ENCODE measurements at regions of chr6 and their contacts with region 1.

Region 1: GRCh38 chr6:127266178-127266891 is at the start of gene RNF146:
- DNase-seq: peak; percentile 55 to 81 (median 75)
- ATAC-seq: peak; percentile 86
- H3K4me3 ChIP-seq: peak within 1 kb of the TSS; percentile 96
- H3K4me3 Mint-ChIP-seq: peak within 1 kb of the TSS; percentile 92 to 100 (median 96)
- H3K27ac ChIP-seq: peak within 1 kb of the TSS; percentile 95
- H3K27ac Mint-ChIP-seq: peak within 1 kb of the TSS; percentile 91 to 100 (median 98)
- H3K4me1 ChIP-seq: peaks cover 12 to 15% of the 10 kb centered on the region in 2 donors
- H3K4me1 Mint-ChIP-seq: peaks cover 28 to 53% (median 41%) of the 10 kb centered on the region in 7 donors
- H3K27me3 ChIP-seq: no peaks in the 10 kb centered on the region
- H3K27me3 Mint-ChIP-seq: peaks cover 0 to 19% (median 0%) of the 10 kb centered on the region in 5 donors
- total RNA-seq, gene RNF146: 17.6 to 38.1 (median 20.8) TPM

Region 2: GRCh38 chr6:125779924-125780539 is 1486.3 kb before region 1 on chr6:
- CTCF ChIA-PET with region 1: no interaction called
- POLR2A ChIA-PET with region 1: no interaction called
- intact Hi-C with region 1: loop called in 1 of 2 experiments (anchors 1 kb)
- DNase-seq: peak; percentile 83 to 96 (median 94)
- ATAC-seq: peak; percentile 89
- H3K4me3 ChIP-seq: peak overlapping the region; percentile 84
- H3K4me3 Mint-ChIP-seq: no peak overlapping the region
- H3K27ac ChIP-seq: peak overlapping the region; percentile 77
- H3K27ac Mint-ChIP-seq: no peak overlapping the region
- H3K4me1 ChIP-seq: peaks cover 4 to 19% of the 10 kb centered on the region in 2 donors
- H3K4me1 Mint-ChIP-seq: peaks cover 5 to 27% (median 22%) of the 10 kb centered on the region in 7 donors
- H3K27me3 ChIP-seq: no peaks in the 10 kb centered on the region
- H3K27me3 Mint-ChIP-seq: peaks cover 0 to 28% (median 0%) of the 10 kb centered on the region in 5 donors

Region 3: GRCh38 chr6:125986300-125987025 is 1279.9 kb before region 1 on chr6 and contains the start of gene TRMT11:
- CTCF ChIA-PET with region 1: no interaction called
- POLR2A ChIA-PET with region 1: no interaction called
- intact Hi-C with region 1: loop called (anchors 5 to 10 kb)
- DNase-seq: peak; percentile 58 to 80 (median 77)
- ATAC-seq: peak; percentile 95
- H3K4me3 ChIP-seq: peak within 1 kb of the TSS; percentile 89
- H3K4me3 Mint-ChIP-seq: peak within 1 kb of the TSS in 4 of 10 donors; percentile 12 to 40 (median 24)
- H3K27ac ChIP-seq: peak within 1 kb of the TSS; percentile 76
- H3K27ac Mint-ChIP-seq: no peak within 1 kb of the TSS
- H3K4me1 ChIP-seq: peaks cover 14 to 21% of the 10 kb centered on the region in 2 donors
- H3K4me1 Mint-ChIP-seq: peaks cover 0 to 19% (median 2%) of the 10 kb centered on the region in 7 donors
- H3K27me3 ChIP-seq: no peaks in the 10 kb centered on the region
- H3K27me3 Mint-ChIP-seq: no peaks in the 10 kb centered on the region
- total RNA-seq, gene TRMT11: 13.6 to 34.1 (median 20.1) TPM

Region 4: GRCh38 chr6:126339796-126340609 is 926.3 kb before region 1 on chr6 and contains the start of gene CENPW:
- CTCF ChIA-PET with region 1: no interaction called
- POLR2A ChIA-PET with region 1: no interaction called
- intact Hi-C with region 1: loop called in 1 of 2 experiments (anchors 1 kb)
- DNase-seq: peak; percentile 84 to 96 (median 87)
- ATAC-seq: peak; percentile 98
- H3K4me3 ChIP-seq: peak within 1 kb of the TSS; percentile 80
- H3K4me3 Mint-ChIP-seq: no peak within 1 kb of the TSS
- H3K27ac ChIP-seq: peak within 1 kb of the TSS; percentile 33
- H3K27ac Mint-ChIP-seq: no peak within 1 kb of the TSS
- H3K4me1 ChIP-seq: peaks cover 6 to 12% of the 10 kb centered on the region in 2 donors
- H3K4me1 Mint-ChIP-seq: peaks cover 5 to 21% (median 12%) of the 10 kb centered on the region in 7 donors
- H3K27me3 ChIP-seq: no peaks in the 10 kb centered on the region
- H3K27me3 Mint-ChIP-seq: no peaks in the 10 kb centered on the region
- total RNA-seq, gene CENPW: 1.2 to 37.1 (median 3.9) TPM

Region 5: GRCh38 chr6:126738146-126738545 is 528.2 kb before region 1 on chr6:
- CTCF ChIA-PET with region 1: no interaction called
- POLR2A ChIA-PET with region 1: no interaction called
- intact Hi-C with region 1: no loop called
- DNase-seq: no peak
- ATAC-seq: no peak
- H3K4me3 ChIP-seq: no peak overlapping the region
- H3K4me3 Mint-ChIP-seq: no peak overlapping the region
- H3K27ac ChIP-seq: no peak overlapping the region
- H3K27ac Mint-ChIP-seq: no peak overlapping the region
- H3K4me1 ChIP-seq: no peaks in the 10 kb centered on the region
- H3K4me1 Mint-ChIP-seq: no peaks in the 10 kb centered on the region
- H3K27me3 ChIP-seq: no peaks in the 10 kb centered on the region
- H3K27me3 Mint-ChIP-seq: peaks cover 0 to 4% (median 0%) of the 10 kb centered on the region in 5 donors

Region 6: GRCh38 chr6:127279815-127280214 is 13.5 kb after region 1 on chr6:
- CTCF ChIA-PET with region 1: interaction called, 6 read pairs
- POLR2A ChIA-PET with region 1: interaction called, 5 read pairs
- intact Hi-C with region 1: loop called in 1 of 2 experiments (anchors 1 kb)
- DNase-seq: no peak
- ATAC-seq: no peak
- H3K4me3 ChIP-seq: no peak overlapping the region
- H3K4me3 Mint-ChIP-seq: no peak overlapping the region
- H3K27ac ChIP-seq: no peak overlapping the region
- H3K27ac Mint-ChIP-seq: peak overlapping the region in 6 of 9 donors; percentile 16 to 72 (median 46)
- H3K4me1 ChIP-seq: no peaks in the 10 kb centered on the region
- H3K4me1 Mint-ChIP-seq: peaks cover 0 to 25% (median 14%) of the 10 kb centered on the region in 7 donors
- H3K27me3 ChIP-seq: no peaks in the 10 kb centered on the region
- H3K27me3 Mint-ChIP-seq: no peaks in the 10 kb centered on the region

Region 7: DNA sequence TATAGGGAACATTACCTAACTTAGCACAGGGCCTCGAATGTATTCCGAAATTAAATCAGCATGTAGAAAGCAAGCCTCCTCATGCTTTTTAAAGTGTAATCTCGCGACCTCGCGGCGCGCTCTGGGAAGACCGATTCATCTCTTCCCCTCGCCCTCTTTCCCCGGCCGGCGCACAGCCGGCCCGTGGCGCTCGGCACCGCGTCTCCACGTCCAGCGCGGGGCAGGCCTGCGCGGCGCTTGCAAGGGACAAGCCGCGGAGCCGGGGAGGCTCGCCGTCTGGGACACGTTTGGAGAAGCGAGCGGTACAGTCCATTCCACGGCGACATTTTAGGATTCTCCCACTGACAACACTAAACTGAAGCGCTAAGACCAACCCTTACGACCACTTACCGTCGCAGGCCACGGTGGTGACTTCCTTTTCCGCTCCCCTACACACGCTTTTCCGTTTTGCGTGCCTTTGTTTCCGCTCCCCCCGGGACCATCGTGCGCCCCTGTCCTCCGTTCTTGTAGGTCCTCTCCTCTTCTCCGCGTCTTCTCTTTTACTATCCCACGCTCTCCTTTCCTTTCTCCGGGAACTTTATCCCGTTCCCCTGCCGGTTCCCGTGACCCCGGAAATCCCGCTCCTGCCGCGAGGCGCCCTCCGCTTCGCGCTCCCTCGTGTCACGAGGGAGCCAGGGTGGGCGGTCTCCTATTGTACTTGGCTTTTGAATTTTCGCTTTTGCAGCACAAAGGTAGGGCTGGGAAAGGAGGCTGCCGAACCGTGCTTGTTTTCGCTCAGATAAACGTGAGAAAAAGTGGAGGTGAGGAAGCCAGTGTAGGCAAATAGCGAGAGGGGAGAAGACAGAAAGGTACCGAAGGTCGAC is 76.8 kb after region 1 on chr6 and contains the start of gene ECHDC1:
- CTCF ChIA-PET with region 1: no interaction called
- POLR2A ChIA-PET with region 1: interaction called, 5 read pairs
- intact Hi-C with region 1: loop called (anchors 1 kb)
- DNase-seq: peak; percentile 45 to 76 (median 70)
- ATAC-seq: peak; percentile 87
- H3K4me3 ChIP-seq: peak within 1 kb of the TSS; percentile 83
- H3K4me3 Mint-ChIP-seq: no peak within 1 kb of the TSS
- H3K27ac ChIP-seq: peak within 1 kb of the TSS; percentile 91
- H3K27ac Mint-ChIP-seq: no peak within 1 kb of the TSS
- H3K4me1 ChIP-seq: peaks cover 34 to 39% of the 10 kb centered on the region in 2 donors
- H3K4me1 Mint-ChIP-seq: peaks cover 0 to 12% (median 9%) of the 10 kb centered on the region in 7 donors
- H3K27me3 ChIP-seq: no peaks in the 10 kb centered on the region
- H3K27me3 Mint-ChIP-seq: no peaks in the 10 kb centered on the region
- total RNA-seq, gene ECHDC1: 18.1 to 46.5 (median 34.3) TPM

Region 8: GRCh38 chr6:128520436-128521281 is 1254.3 kb after region 1 on chr6 and contains the start of gene PTPRK:
- CTCF ChIA-PET with region 1: no interaction called
- POLR2A ChIA-PET with region 1: no interaction called
- intact Hi-C with region 1: loop called (anchors 1 to 2 kb)
- DNase-seq: peak; percentile 70 to 90 (median 87)
- ATAC-seq: peak; percentile 95
- H3K4me3 ChIP-seq: peak within 1 kb of the TSS; percentile 77
- H3K4me3 Mint-ChIP-seq: peak within 1 kb of the TSS; percentile 90 to 98 (median 94)
- H3K27ac ChIP-seq: peak within 1 kb of the TSS; percentile 59
- H3K27ac Mint-ChIP-seq: peak within 1 kb of the TSS; percentile 73 to 94 (median 82)
- H3K4me1 ChIP-seq: peaks cover 5 to 17% of the 10 kb centered on the region in 2 donors
- H3K4me1 Mint-ChIP-seq: peaks cover 8 to 22% (median 14%) of the 10 kb centered on the region in 7 donors
- H3K27me3 ChIP-seq: no peaks in the 10 kb centered on the region
- H3K27me3 Mint-ChIP-seq: peaks cover 52 to 89% (median 68%) of the 10 kb centered on the region in 5 donors
- total RNA-seq, gene PTPRK: 1.6 to 6.5 (median 3.9) TPM